ENCODE measurements at regions of chr11 and their contacts with region 1.

Region 1: DNA sequence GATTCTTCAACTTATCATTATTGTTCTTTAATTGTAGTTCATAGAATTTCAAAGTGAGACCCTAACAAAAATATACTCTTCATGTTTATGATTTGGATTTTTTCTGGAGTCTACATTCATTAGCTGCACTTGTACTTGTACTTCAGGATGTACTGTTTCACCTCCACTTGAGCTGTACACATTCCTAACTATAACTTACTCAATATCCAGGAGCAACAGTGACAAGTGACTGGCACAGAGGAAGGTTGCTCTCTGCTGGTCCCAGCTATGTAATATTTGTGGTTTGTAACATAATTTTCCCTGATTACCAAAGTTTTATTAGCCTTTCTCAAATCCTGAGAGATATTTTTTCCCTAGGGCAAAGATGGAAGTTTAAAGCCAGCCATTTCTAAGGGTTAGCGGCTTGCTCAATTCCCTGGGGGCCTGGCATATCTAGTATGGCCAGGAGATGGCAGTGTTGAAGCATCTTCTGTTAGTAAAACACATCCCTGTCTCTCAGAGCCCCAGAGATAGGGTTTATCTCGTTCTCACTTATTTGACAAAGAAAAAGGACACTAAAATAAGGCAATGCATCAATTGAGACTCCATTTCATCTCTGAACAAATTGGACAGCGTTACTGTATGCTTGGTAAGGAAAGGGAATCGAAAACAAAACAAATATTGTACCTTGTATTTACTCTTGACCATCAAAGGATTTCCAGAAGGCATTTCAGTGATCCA is 14.2 kb downstream of the OR52A5 start:
- DNase-seq: peak; percentile 75
- H3K4me3 ChIP-seq: no peak overlapping the region
- H3K27ac ChIP-seq: no peak overlapping the region
- H3K4me1 ChIP-seq: no peaks in the 10 kb centered on the region
- H3K27me3 ChIP-seq: no peaks in the 10 kb centered on the region
- CTCF ChIP-seq: peak; percentile 68 to 80
- POLR2A ChIP-seq: no peak

Region 2: DNA sequence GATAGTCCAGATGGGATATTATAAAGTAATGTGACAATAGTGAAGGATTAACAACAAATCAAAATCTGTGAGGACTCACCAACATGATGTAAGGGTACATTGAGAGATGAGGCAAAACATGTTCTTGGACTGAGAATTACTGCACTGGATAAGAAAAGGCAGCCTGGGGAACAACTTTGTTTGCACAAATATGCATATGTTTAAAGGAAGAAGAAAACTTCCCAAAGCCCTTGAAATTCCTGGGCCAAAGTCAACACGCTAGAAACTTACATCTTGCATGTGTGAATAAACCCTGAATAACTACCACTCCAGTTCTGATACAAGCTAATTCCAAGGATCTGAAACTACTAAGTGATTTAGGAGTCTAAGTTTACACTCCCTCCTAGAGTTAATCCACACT is 13.1 kb after region 1 on chr11:
- CTCF ChIA-PET with region 1: interaction called, 10 read pairs
- POLR2A ChIA-PET with region 1: no interaction called
- dilution Hi-C with region 1: no loop called
- intact Hi-C with region 1: no loop called
- DNase-seq: no peak
- H3K4me3 ChIP-seq: no peak overlapping the region
- H3K27ac ChIP-seq: no peak overlapping the region
- H3K4me1 ChIP-seq: no peaks in the 10 kb centered on the region
- H3K27me3 ChIP-seq: no peaks in the 10 kb centered on the region
- CTCF ChIP-seq: no peak
- POLR2A ChIP-seq: no peak

Region 3: GRCh38 chr11:5291207-5291838 is 167.4 kb after region 1 on chr11:
- CTCF ChIA-PET with region 1: interaction called, 10 read pairs
- POLR2A ChIA-PET with region 1: no interaction called
- dilution Hi-C with region 1: no loop called
- intact Hi-C with region 1: loop called (anchors 1 kb)
- DNase-seq: peak; percentile 32
- H3K4me3 ChIP-seq: no peak overlapping the region
- H3K27ac ChIP-seq: no peak overlapping the region
- H3K4me1 ChIP-seq: no peaks in the 10 kb centered on the region
- H3K27me3 ChIP-seq: no peaks in the 10 kb centered on the region
- CTCF ChIP-seq: peak; percentile 55 to 64
- POLR2A ChIP-seq: no peak

Region 4: DNA sequence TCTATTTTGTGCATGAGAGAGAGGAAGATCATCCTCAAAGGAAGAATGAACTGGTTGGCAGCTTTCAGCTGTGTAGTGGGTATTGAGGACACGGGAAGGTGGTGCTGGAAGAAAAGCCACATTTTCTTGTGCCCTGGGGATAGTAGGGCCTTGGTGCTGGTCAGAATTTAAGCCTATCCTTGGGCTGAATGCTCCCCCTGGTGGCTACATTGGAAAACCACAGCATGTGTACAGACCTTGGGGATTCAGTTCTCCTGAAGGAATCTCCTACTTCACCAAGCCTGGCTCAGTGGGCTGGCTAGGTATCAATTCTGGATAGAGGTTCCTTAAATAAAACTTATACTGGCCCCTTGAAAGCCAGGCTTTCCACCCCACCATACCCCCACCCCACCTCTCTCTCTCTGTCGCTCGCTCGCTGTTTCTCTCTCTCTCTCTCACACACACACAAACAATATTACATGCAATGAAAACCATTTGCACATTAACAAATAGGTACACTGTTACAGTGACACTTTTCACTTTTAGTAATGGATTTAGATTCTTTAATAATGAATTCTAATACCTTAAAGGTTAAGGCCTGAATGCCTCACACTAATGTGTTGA is 256.9 kb after region 1 on chr11:
- CTCF ChIA-PET with region 1: interaction called, 58 read pairs
- POLR2A ChIA-PET with region 1: no interaction called
- dilution Hi-C with region 1: no loop called
- intact Hi-C with region 1: loop called (anchors 1 kb)
- DNase-seq: peak; percentile 69
- H3K4me3 ChIP-seq: no peak overlapping the region
- H3K27ac ChIP-seq: no peak overlapping the region
- H3K4me1 ChIP-seq: no peaks in the 10 kb centered on the region
- H3K27me3 ChIP-seq: peaks cover 0 to 2% of the 10 kb centered on the region in 2 experiments
- CTCF ChIP-seq: peak; percentile 67 to 84
- POLR2A ChIP-seq: no peak

Region 5: DNA sequence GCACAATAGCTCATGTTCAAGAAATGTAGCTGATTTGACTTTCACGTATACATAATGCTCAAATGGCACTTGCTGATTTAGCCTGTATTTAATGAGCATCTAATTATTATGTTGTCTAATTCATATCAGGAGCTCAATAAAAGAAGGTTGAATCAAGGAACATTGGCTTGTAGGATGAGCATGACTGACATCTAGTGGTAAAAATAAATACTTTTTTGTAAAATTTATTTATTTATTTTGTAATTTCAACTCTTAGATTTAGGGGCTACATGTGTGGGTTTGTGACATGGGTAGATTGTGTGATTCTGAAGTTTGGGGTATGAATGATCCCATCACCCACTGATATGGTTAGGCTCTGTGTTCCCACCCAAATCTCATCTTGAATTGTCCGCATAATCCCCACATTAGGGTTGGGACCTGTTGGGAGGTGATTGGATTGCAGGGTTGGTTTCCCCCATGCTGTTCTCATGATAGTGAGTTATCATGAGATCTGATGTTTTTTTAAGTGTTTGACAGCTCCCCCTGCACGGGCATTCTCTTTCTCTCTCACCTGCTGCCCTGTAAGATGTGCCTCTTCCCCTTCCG is 767.3 kb after region 1 on chr11:
- CTCF ChIA-PET with region 1: interaction called, 15 read pairs
- POLR2A ChIA-PET with region 1: no interaction called
- dilution Hi-C with region 1: no loop called
- intact Hi-C with region 1: loop called (anchors 5 kb)
- DNase-seq: peak; percentile 32
- H3K4me3 ChIP-seq: no peak overlapping the region
- H3K27ac ChIP-seq: no peak overlapping the region
- H3K4me1 ChIP-seq: no peaks in the 10 kb centered on the region
- H3K27me3 ChIP-seq: no peaks in the 10 kb centered on the region
- CTCF ChIP-seq: peak in 1 of 2 donors; percentile 13
- POLR2A ChIP-seq: no peak